Sigmoid colon (tissue), 7 donors: ENCODE measurements at regions of chr5 and their contacts with region 1.

Region 1: GRCh38 chr5:15260356-15261268 is 239.4 kb upstream of the FBXL7 start:
- DNase-seq: no peak
- H3K4me3 ChIP-seq: peak overlapping the region in 1 of 4 donors; percentile 17
- H3K27ac ChIP-seq: peak overlapping the region in 3 of 4 donors; percentile 70 to 77 (median 75)
- H3K4me1 ChIP-seq: peaks cover 0 to 29% (median 25%) of the 10 kb centered on the region in 4 donors
- H3K27me3 ChIP-seq: no peaks in the 10 kb centered on the region
- CTCF ChIP-seq: no peak
- EP300 ChIP-seq: peak in 1 of 4 donors; percentile 19
- POLR2A ChIP-seq: no peak

Region 2: DNA sequence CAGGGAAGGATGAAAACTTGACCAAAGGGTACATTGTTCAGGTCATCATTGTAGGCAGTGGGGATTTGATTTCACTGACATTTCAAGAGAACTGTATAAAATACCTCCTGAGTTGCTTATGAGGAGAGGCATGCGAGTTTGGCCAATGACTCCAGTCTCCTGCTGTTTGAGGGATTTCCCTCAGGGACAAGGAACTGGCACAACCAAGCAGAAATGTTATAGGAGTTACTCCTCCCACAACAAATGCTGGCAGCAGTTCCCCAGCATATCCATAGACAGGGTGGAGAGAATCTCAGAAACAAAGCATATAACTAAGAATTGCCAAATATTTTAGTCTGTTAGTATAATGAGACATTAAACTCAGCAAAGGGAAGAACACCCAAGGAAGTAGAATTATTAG is 192.2 kb after region 1 on chr5:
- intact Hi-C with region 1: loop called (anchors 2 kb)
- DNase-seq: no peak
- H3K4me3 ChIP-seq: peak overlapping the region in 1 of 4 donors; percentile 1
- H3K27ac ChIP-seq: peak overlapping the region in 3 of 4 donors; percentile 51 to 73 (median 73)
- H3K4me1 ChIP-seq: peaks cover 0 to 39% (median 22%) of the 10 kb centered on the region in 4 donors
- H3K27me3 ChIP-seq: no peaks in the 10 kb centered on the region
- CTCF ChIP-seq: no peak
- EP300 ChIP-seq: no peak
- POLR2A ChIP-seq: no peak